WTC11 (cell line): ENCODE measurements at regions of chr14 and their contacts with region 1.

Region 1: GRCh38 chr14:102774391-102775153 is 2.7 kb upstream of the TRAF3 start:
- DNase-seq: peak; percentile 48
- ATAC-seq: peak; percentile 55
- H3K4me3 Mint-ChIP-seq: no peak overlapping the region
- H3K27ac Mint-ChIP-seq: no peak overlapping the region; the same call in 1 of the 2 replicates
- H3K4me1 Mint-ChIP-seq: peaks cover 29% of the 10 kb centered on the region
- H3K27me3 Mint-ChIP-seq: peaks cover 14% of the 10 kb centered on the region
- CTCF ChIP-seq: no peak

Region 2: DNA sequence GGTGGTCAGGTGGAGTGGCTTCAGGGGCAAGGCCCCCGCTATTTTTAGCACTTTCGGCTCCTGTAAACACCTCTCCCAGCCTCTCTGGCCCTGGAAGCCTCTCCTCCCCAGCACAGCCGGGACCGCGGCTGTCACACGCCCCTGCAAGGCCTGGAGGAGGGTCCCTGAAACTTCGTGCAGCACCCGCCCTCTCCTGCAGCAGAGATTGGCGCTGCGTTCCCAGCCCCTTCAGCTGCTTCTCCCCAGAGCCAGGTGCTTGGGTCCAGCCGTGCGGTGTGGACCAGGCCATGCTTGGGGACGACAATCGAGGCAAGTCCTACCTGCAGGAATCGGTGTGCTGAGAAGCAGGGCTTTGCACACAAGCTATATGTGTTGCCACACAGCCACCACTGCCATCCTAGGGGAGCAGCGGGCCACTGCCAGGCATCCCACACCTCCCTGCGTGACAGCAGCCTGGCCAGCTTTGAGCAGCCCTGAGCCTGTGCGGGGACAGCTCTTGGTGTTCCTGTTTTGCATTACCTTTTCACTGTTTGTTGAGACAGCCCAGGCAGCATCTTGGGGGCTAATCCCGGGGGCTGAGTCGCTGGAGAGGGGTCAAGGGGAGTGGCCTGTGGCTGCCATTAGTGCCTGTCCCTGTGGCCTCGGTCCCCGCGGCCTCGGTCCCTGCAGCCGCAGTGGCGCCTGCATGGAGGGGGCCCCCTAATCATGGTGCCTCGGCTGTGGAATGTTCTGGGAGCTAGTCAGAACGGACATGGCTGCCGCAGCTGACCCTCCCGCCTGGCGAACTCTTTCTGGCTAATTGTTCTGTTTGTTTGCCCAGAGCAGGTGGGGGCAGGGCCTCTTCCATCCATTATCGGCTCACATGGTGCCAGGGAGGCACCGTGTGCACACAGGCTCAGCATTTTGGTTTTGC is 24.9 kb before region 1 on chr14:
- CTCF ChIA-PET with region 1: interaction called, 12 read pairs
- POLR2A ChIA-PET with region 1: no interaction called
- DNase-seq: peak; percentile 39
- ATAC-seq: peak; percentile 68
- H3K4me3 Mint-ChIP-seq: no peak overlapping the region
- H3K27ac Mint-ChIP-seq: peak overlapping the region; percentile 89
- H3K4me1 Mint-ChIP-seq: peaks cover 12% of the 10 kb centered on the region
- H3K27me3 Mint-ChIP-seq: no peaks in the 10 kb centered on the region
- CTCF ChIP-seq: no peak

Region 3: GRCh38 chr14:102759456-102760187 is 14.9 kb before region 1 on chr14:
- CTCF ChIA-PET with region 1: interaction called, 33 read pairs
- POLR2A ChIA-PET with region 1: no interaction called
- DNase-seq: no peak
- ATAC-seq: peak; percentile 52
- H3K4me3 Mint-ChIP-seq: no peak overlapping the region; the same call in 1 of the 2 replicates
- H3K27ac Mint-ChIP-seq: peak overlapping the region; percentile 60; the same call in 1 of the 2 replicates
- H3K4me1 Mint-ChIP-seq: peaks cover 32% of the 10 kb centered on the region
- H3K27me3 Mint-ChIP-seq: no peaks in the 10 kb centered on the region; the same call in 1 of the 2 replicates
- CTCF ChIP-seq: no peak

Region 4: GRCh38 chr14:102785584-102785942 is 11.0 kb after region 1 on chr14:
- CTCF ChIA-PET with region 1: interaction called, 18 read pairs
- POLR2A ChIA-PET with region 1: no interaction called
- DNase-seq: no peak
- ATAC-seq: peak; percentile 59
- H3K4me3 Mint-ChIP-seq: no peak overlapping the region
- H3K27ac Mint-ChIP-seq: no peak overlapping the region
- H3K4me1 Mint-ChIP-seq: peaks cover 20% of the 10 kb centered on the region
- H3K27me3 Mint-ChIP-seq: no peaks in the 10 kb centered on the region
- CTCF ChIP-seq: no peak

Region 5: GRCh38 chr14:102796731-102797200 is 22.2 kb after region 1 on chr14:
- CTCF ChIA-PET with region 1: no interaction called
- POLR2A ChIA-PET with region 1: no interaction called
- DNase-seq: no peak
- ATAC-seq: no peak; the same call in 1 of the 2 replicates
- H3K4me3 Mint-ChIP-seq: no peak overlapping the region
- H3K27ac Mint-ChIP-seq: no peak overlapping the region
- H3K4me1 Mint-ChIP-seq: peaks cover 5% of the 10 kb centered on the region
- H3K27me3 Mint-ChIP-seq: no peaks in the 10 kb centered on the region
- CTCF ChIP-seq: no peak